Panc1 (cell line): ENCODE measurements at regions of chr6 and their contacts with region 1.

Region 1: GRCh38 chr6:13989496-13990144 is 64.9 kb downstream of the RNF182 start:
- DNase-seq: no peak
- ATAC-seq: no peak
- H3K4me3 ChIP-seq: no peak overlapping the region
- H3K27ac ChIP-seq: no peak overlapping the region
- H3K4me1 ChIP-seq: no peaks in the 10 kb centered on the region
- H3K27me3 ChIP-seq: no peaks in the 10 kb centered on the region
- CTCF ChIP-seq: no peak

Region 2: GRCh38 chr6:13814176-13814937 is 175.3 kb before region 1 on chr6 and contains the start of gene MCUR1:
- CTCF ChIA-PET with region 1: no interaction called
- POLR2A ChIA-PET with region 1: interaction called, 11 read pairs
- in situ Hi-C with region 1: no loop called
- intact Hi-C with region 1: no loop called
- DNase-seq: no peak
- ATAC-seq: peak; percentile 93
- H3K4me3 ChIP-seq: peak within 1 kb of the TSS; percentile 71 to 91
- H3K27ac ChIP-seq: peak within 1 kb of the TSS; percentile 88
- H3K4me1 ChIP-seq: peaks cover 20% of the 10 kb centered on the region
- H3K27me3 ChIP-seq: no peaks in the 10 kb centered on the region
- CTCF ChIP-seq: peak; percentile 38
- total RNA-seq, gene MCUR1: 33.1 TPM

Region 3: DNA sequence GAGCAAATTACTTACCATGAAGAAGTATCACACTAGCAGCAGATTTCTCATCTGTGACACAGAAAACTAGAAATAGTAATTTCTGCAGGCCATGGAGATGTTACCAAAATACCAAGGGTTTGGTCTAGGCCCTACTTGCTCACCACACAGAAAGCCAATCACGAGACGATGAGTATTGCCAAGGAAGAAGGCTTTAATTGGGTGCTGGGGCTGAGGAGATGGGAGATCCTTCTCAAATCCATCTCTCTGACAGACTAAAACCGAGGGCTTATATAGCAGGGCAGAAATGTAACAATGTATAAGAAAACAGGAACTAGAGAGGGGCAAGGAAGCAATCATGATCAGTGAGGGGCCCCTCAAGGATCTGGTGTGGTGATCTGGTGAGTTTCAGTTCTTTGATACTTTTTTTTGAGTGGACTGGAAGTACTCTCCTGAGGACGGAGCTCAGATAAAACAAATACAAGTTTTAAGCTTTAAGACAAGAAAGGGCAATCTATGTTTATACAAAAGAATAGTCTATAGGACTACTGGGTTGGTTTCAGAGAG is 24.0 kb before region 1 on chr6:
- CTCF ChIA-PET with region 1: no interaction called
- POLR2A ChIA-PET with region 1: no interaction called
- in situ Hi-C with region 1: no loop called
- intact Hi-C with region 1: no loop called
- DNase-seq: no peak
- ATAC-seq: no peak
- H3K4me3 ChIP-seq: no peak overlapping the region
- H3K27ac ChIP-seq: no peak overlapping the region
- H3K4me1 ChIP-seq: no peaks in the 10 kb centered on the region
- H3K27me3 ChIP-seq: no peaks in the 10 kb centered on the region
- CTCF ChIP-seq: no peak

Region 4: DNA sequence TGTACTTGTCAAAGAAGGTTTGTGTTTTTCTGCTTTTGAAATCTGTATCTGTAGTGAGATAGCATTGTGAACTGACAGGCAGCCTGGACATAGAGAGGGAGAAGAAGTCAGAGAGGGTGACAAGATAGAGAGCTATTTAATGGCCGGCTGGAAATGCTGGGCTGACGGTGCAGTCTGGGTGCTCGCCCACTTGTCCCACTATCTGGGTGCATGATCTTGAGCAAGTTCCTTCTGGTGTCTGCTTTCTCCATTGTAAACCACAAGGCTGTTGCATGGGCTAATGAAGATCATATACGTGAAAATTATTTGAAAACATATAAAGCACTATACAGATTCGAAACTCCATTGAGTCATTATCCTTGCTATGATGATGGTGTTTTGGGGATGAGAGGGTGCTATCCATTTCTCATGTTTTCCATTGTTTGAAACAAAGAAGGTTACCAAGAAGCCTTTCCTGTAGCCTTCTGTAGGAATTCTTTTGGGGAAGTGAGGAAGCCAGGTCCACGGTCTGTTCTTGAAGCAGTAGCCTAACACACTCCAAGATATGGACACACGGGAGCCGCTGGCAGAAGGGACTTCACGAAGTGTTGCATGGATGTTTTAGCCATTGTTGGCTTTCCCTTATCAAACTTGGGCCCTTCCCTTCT is 146.4 kb after region 1 on chr6:
- CTCF ChIA-PET with region 1: no interaction called
- POLR2A ChIA-PET with region 1: no interaction called
- in situ Hi-C with region 1: no loop called
- intact Hi-C with region 1: no loop called
- DNase-seq: no peak
- ATAC-seq: no peak
- H3K4me3 ChIP-seq: no peak overlapping the region
- H3K27ac ChIP-seq: no peak overlapping the region
- H3K4me1 ChIP-seq: no peaks in the 10 kb centered on the region
- H3K27me3 ChIP-seq: no peaks in the 10 kb centered on the region
- CTCF ChIP-seq: no peak